ENCODE measurements at regions of chr5 and their contacts with region 1.

Region 1: GRCh38 chr5:65721720-65722574 is at the starts of genes NLN and SGTB:
- DNase-seq: peak; percentile 86
- ATAC-seq: peak; percentile 98
- H3K4me3 ChIP-seq: peak within 1 kb of the TSS; percentile 77 to 96 (median 87)
- H3K4me3 Mint-ChIP-seq: peak within 1 kb of the TSS; percentile 91
- H3K27ac ChIP-seq: peak within 1 kb of the TSS; percentile 23 to 83
- H3K27ac Mint-ChIP-seq: peak within 1 kb of the TSS; percentile 83
- H3K4me1 ChIP-seq: peaks cover 12 to 13% of the 10 kb centered on the region in 2 donors
- H3K4me1 Mint-ChIP-seq: peaks cover 24% of the 10 kb centered on the region
- H3K27me3 ChIP-seq: no peaks in the 10 kb centered on the region
- H3K27me3 Mint-ChIP-seq: no peaks in the 10 kb centered on the region
- CTCF ChIP-seq: no peak
- total RNA-seq, gene NLN: 6.8 and 8.4 TPM in 2 replicates
- total RNA-seq, gene SGTB: 5.5 and 7.3 TPM in 2 replicates

Region 2: GRCh38 chr5:64768358-64769312 is 953.3 kb before region 1 on chr5 and contains the starts of genes CWC27 and SREK1IP1:
- CTCF ChIA-PET with region 1: no interaction called
- POLR2A ChIA-PET with region 1: no interaction called
- intact Hi-C with region 1: loop called (anchors 2 kb)
- DNase-seq: peak; percentile 92
- ATAC-seq: peak; percentile 94
- H3K4me3 ChIP-seq: peak within 1 kb of the TSS; percentile 81 to 99 (median 96)
- H3K4me3 Mint-ChIP-seq: peak within 1 kb of the TSS; percentile 99
- H3K27ac ChIP-seq: peak within 1 kb of the TSS; percentile 73 to 84
- H3K27ac Mint-ChIP-seq: peak within 1 kb of the TSS; percentile 96
- H3K4me1 ChIP-seq: peaks cover 30 to 37% of the 10 kb centered on the region in 2 donors
- H3K4me1 Mint-ChIP-seq: peaks cover 55% of the 10 kb centered on the region
- H3K27me3 ChIP-seq: no peaks in the 10 kb centered on the region
- H3K27me3 Mint-ChIP-seq: no peaks in the 10 kb centered on the region
- CTCF ChIP-seq: no peak
- total RNA-seq, gene CWC27: 27.5 and 30.5 TPM in 2 replicates
- total RNA-seq, gene SREK1IP1: 21.0 and 25.5 TPM in 2 replicates

Region 3: DNA sequence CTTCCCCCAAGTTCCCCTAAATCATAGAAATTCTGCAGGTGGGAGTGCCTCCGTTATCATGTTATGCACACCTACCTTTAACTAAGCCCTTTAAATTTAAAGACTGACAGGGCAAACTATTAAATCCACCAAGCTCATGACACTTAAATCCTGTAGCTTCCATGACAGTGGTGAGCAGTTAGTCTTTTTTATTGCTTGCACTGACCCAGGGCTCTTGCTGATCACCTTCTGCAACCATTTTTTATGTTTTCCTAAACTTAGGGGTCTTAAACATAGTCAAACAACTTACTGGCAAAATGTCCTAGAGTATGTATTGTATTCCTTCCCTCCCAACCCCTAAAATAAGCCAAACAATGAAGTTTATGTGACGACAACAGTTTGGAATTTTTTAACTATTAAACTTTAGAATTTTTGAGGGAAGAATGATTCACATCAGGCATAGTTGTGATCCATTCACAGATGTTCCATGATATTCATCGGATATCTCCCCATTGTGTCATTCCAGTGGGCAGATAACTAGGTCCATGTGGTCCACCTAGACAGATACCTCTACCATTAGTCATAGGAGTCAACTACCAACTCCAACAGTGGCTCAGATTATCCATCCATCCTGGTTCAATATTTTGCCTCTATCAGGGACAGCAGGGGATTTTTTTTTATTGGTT is 523.4 kb before region 1 on chr5:
- CTCF ChIA-PET with region 1: no interaction called
- POLR2A ChIA-PET with region 1: no interaction called
- intact Hi-C with region 1: no loop called
- DNase-seq: no peak
- ATAC-seq: no peak
- H3K4me3 ChIP-seq: no peak overlapping the region
- H3K4me3 Mint-ChIP-seq: no peak overlapping the region
- H3K27ac ChIP-seq: no peak overlapping the region
- H3K27ac Mint-ChIP-seq: no peak overlapping the region
- H3K4me1 ChIP-seq: no peaks in the 10 kb centered on the region
- H3K4me1 Mint-ChIP-seq: no peaks in the 10 kb centered on the region
- H3K27me3 ChIP-seq: no peaks in the 10 kb centered on the region
- H3K27me3 Mint-ChIP-seq: no peaks in the 10 kb centered on the region
- CTCF ChIP-seq: no peak

Region 4: DNA sequence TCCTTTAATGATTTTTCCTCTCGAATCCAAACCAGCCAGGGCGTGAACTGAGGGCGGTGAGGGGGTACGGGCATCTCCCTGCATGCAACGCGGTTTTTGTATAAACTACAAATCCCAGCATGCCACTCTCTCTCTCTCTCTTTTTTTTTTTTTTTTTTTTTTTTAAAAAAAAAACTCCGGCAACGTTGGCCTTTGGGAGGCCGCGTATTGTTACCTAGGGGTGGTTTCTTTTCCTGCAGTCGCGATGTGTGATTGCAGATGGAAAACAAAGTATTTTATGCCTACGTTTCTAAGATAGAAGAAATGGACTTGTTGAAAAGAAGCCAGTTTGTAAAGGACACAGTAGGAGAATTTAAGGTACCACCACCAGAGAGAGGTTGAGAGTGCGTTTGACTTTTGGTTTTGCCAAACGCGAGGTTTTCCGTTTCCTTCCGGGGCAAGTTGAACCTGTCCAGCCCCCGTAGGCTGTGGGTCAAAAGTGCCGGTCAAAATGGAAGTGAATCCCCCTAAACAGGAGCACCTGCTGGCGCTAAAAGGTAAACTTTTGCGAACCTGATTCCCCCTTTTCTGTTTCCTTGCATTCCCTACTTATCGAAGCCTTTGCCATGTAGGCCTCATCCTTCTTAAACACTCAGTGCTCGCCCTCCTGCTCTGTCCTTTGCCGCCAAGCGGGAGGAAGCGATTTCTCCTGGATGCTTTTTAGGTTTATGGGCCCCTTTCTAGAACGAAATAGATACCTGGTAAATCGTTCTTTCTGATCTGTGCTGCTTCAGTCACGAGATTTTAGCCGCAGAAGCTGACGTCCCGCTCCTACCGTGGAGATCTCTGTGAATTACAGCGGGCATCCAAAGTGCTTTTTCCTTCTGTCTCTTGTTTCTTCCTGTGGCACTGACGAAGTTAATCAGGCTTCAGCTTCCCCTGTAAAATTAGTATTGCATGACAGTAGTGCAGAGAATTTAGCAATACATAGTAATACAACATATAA is 97.1 kb before region 1 on chr5 and contains the starts of genes SHLD3 and TRAPPC13:
- CTCF ChIA-PET with region 1: no interaction called
- POLR2A ChIA-PET with region 1: no interaction called
- intact Hi-C with region 1: loop called (anchors 1 kb)
- DNase-seq: peak; percentile 96
- ATAC-seq: peak; percentile 76
- H3K4me3 ChIP-seq: peak within 1 kb of the TSS; percentile 88 to 99 (median 88)
- H3K4me3 Mint-ChIP-seq: peak within 1 kb of the TSS; percentile 99
- H3K27ac ChIP-seq: peak within 1 kb of the TSS; percentile 73 to 84
- H3K27ac Mint-ChIP-seq: peak within 1 kb of the TSS; percentile 98
- H3K4me1 ChIP-seq: peaks cover 16 to 21% of the 10 kb centered on the region in 2 donors
- H3K4me1 Mint-ChIP-seq: peaks cover 41% of the 10 kb centered on the region
- H3K27me3 ChIP-seq: no peaks in the 10 kb centered on the region
- H3K27me3 Mint-ChIP-seq: no peaks in the 10 kb centered on the region
- CTCF ChIP-seq: peak; percentile 18
- total RNA-seq, gene SHLD3: 6.3 and 6.7 TPM in 2 replicates
- total RNA-seq, gene TRAPPC13: 18.8 and 24.4 TPM in 2 replicates

Region 5: GRCh38 chr5:66144074-66144833 is 422.3 kb after region 1 on chr5 and contains the start of gene SREK1:
- CTCF ChIA-PET with region 1: no interaction called
- POLR2A ChIA-PET with region 1: interaction called, 3 read pairs
- intact Hi-C with region 1: loop called (anchors 1 kb)
- DNase-seq: peak; percentile 93
- ATAC-seq: peak; percentile 84
- H3K4me3 ChIP-seq: peak within 1 kb of the TSS; percentile 76 to 99 (median 95)
- H3K4me3 Mint-ChIP-seq: peak within 1 kb of the TSS; percentile 96
- H3K27ac ChIP-seq: peak within 1 kb of the TSS; percentile 97 to 99
- H3K27ac Mint-ChIP-seq: peak within 1 kb of the TSS; percentile 100
- H3K4me1 ChIP-seq: peaks cover 9 to 16% of the 10 kb centered on the region in 2 donors
- H3K4me1 Mint-ChIP-seq: peaks cover 29% of the 10 kb centered on the region
- H3K27me3 ChIP-seq: no peaks in the 10 kb centered on the region
- H3K27me3 Mint-ChIP-seq: no peaks in the 10 kb centered on the region
- CTCF ChIP-seq: no peak
- total RNA-seq, gene SREK1: 116 and 117 TPM in 2 replicates

Region 6: GRCh38 chr5:67047160-67047559 is 1325.2 kb after region 1 on chr5:
- CTCF ChIA-PET with region 1: no interaction called
- POLR2A ChIA-PET with region 1: no interaction called
- intact Hi-C with region 1: no loop called
- DNase-seq: no peak
- ATAC-seq: no peak
- H3K4me3 ChIP-seq: no peak overlapping the region
- H3K4me3 Mint-ChIP-seq: no peak overlapping the region
- H3K27ac ChIP-seq: no peak overlapping the region
- H3K27ac Mint-ChIP-seq: no peak overlapping the region
- H3K4me1 ChIP-seq: no peaks in the 10 kb centered on the region
- H3K4me1 Mint-ChIP-seq: peaks cover 11% of the 10 kb centered on the region
- H3K27me3 ChIP-seq: no peaks in the 10 kb centered on the region
- H3K27me3 Mint-ChIP-seq: peaks cover under 1% of the 10 kb centered on the region
- CTCF ChIP-seq: no peak

Region 7: GRCh38 chr5:67215583-67216471 is 1493.9 kb after region 1 on chr5:
- CTCF ChIA-PET with region 1: no interaction called
- POLR2A ChIA-PET with region 1: no interaction called
- intact Hi-C with region 1: loop called (anchors 10 kb)
- DNase-seq: peak; percentile 95
- ATAC-seq: peak; percentile 97
- H3K4me3 ChIP-seq: peak overlapping the region in 3 of 5 experiments; percentile 17 to 28 (median 20)
- H3K4me3 Mint-ChIP-seq: peak overlapping the region; percentile 85
- H3K27ac ChIP-seq: peak overlapping the region; percentile 92 to 98
- H3K27ac Mint-ChIP-seq: peak overlapping the region; percentile 100
- H3K4me1 ChIP-seq: peaks cover 34 to 39% of the 10 kb centered on the region in 2 donors
- H3K4me1 Mint-ChIP-seq: peaks cover 56% of the 10 kb centered on the region
- H3K27me3 ChIP-seq: no peaks in the 10 kb centered on the region
- H3K27me3 Mint-ChIP-seq: no peaks in the 10 kb centered on the region
- CTCF ChIP-seq: no peak

Measured in B cell (primary cell).